B cell (primary cell): ENCODE measurements at regions of chr4 and their contacts with region 1.

Region 1: DNA sequence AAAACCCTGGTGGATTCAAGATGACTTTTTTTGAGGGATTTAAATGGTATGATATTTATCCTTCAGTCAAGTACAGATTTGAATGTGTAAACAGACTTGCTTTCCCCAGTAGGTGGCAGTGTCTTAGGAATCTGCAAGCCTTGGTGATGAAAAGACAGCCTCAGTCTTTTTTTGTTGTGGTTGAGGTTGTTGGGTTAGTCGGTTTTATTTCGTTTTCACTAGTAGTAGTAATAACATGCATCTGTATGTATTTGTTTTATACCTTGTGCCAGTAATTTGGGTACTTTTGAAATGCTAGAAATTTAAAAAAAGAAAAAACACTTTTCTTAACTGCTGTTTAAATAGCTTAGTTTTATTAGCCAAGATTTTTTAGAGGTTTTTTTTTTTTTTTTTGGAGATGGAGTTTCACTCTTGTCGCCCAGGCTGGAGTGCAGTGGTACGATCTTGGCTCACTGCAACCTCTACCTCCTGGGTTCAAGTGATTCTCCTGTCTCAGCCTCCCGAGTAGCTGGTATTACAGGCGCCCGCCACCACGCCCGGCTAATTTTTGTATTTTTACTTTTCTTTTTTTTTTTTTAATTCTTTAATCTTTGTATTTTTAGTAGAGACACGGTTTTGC is 39.2 kb downstream of the COPS4 start:
- DNase-seq: peak; percentile 85
- ATAC-seq: peak; percentile 85
- H3K4me3 ChIP-seq: no peak overlapping the region
- H3K4me3 Mint-ChIP-seq: peak overlapping the region; percentile 71
- H3K27ac ChIP-seq: no peak overlapping the region
- H3K27ac Mint-ChIP-seq: peak overlapping the region; percentile 57
- H3K4me1 ChIP-seq: peaks cover 16 to 19% of the 10 kb centered on the region in 2 donors
- H3K4me1 Mint-ChIP-seq: peaks cover 20% of the 10 kb centered on the region
- H3K27me3 ChIP-seq: no peaks in the 10 kb centered on the region
- H3K27me3 Mint-ChIP-seq: no peaks in the 10 kb centered on the region
- CTCF ChIP-seq: peak; percentile 78

Region 2: GRCh38 chr4:82998898-82999297 is 75.3 kb before region 1 on chr4:
- CTCF ChIA-PET with region 1: no interaction called
- POLR2A ChIA-PET with region 1: no interaction called
- intact Hi-C with region 1: no loop called
- DNase-seq: no peak
- ATAC-seq: no peak
- H3K4me3 ChIP-seq: no peak overlapping the region
- H3K4me3 Mint-ChIP-seq: no peak overlapping the region
- H3K27ac ChIP-seq: no peak overlapping the region
- H3K27ac Mint-ChIP-seq: no peak overlapping the region
- H3K4me1 ChIP-seq: no peaks in the 10 kb centered on the region
- H3K4me1 Mint-ChIP-seq: peaks cover 7% of the 10 kb centered on the region
- H3K27me3 ChIP-seq: no peaks in the 10 kb centered on the region
- H3K27me3 Mint-ChIP-seq: no peaks in the 10 kb centered on the region
- CTCF ChIP-seq: no peak

Region 3: GRCh38 chr4:83054928-83055327 is 19.3 kb before region 1 on chr4:
- CTCF ChIA-PET with region 1: interaction called, 5 read pairs
- POLR2A ChIA-PET with region 1: interaction called, 6 read pairs
- intact Hi-C with region 1: loop called (anchors 2 kb)
- DNase-seq: peak; percentile 52
- ATAC-seq: no peak
- H3K4me3 ChIP-seq: no peak overlapping the region
- H3K4me3 Mint-ChIP-seq: no peak overlapping the region
- H3K27ac ChIP-seq: no peak overlapping the region
- H3K27ac Mint-ChIP-seq: no peak overlapping the region
- H3K4me1 ChIP-seq: no peaks in the 10 kb centered on the region
- H3K4me1 Mint-ChIP-seq: peaks cover 2% of the 10 kb centered on the region
- H3K27me3 ChIP-seq: no peaks in the 10 kb centered on the region
- H3K27me3 Mint-ChIP-seq: no peaks in the 10 kb centered on the region
- CTCF ChIP-seq: peak; percentile 59

Region 4: DNA sequence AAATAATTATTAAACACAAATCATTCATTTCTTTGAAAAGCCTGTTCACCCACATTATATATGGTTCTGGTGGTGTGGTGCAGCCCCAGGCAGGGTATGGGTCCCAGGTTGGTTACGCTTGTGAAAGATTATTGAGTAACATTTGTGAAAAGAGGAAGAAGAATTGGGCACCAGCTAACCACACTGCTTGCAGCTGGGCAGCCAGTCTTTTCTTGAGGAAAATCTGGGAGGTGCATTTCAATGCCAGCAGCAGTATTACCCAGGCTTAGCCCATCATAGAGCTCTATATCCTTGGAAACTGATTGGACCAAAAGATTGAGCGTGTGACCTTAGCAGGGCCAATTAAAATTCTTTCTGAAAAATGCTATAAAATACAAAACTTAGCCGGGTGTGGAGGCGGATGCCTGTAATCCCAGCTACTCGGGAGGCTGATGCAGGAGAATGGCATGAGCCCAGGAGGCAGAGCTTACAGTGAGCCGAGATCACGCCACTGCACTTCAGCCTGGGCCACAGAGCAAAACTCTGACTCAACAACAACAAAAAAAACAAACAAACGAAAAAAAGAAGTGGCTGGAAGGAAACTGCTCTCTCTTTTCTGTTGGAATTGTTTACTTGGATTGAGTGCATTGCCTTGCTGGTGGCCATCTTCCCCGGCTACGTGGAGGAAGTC is 50.1 kb after region 1 on chr4:
- CTCF ChIA-PET with region 1: interaction called, 5 read pairs
- POLR2A ChIA-PET with region 1: interaction called, 10 read pairs
- intact Hi-C with region 1: no loop called
- DNase-seq: peak; percentile 69
- ATAC-seq: peak; percentile 86
- H3K4me3 ChIP-seq: peak overlapping the region in 1 of 5 experiments; percentile 16
- H3K4me3 Mint-ChIP-seq: peak overlapping the region; percentile 75
- H3K27ac ChIP-seq: no peak overlapping the region
- H3K27ac Mint-ChIP-seq: peak overlapping the region; percentile 90
- H3K4me1 ChIP-seq: peaks cover 38 to 47% of the 10 kb centered on the region in 2 donors
- H3K4me1 Mint-ChIP-seq: peaks cover 48% of the 10 kb centered on the region
- H3K27me3 ChIP-seq: no peaks in the 10 kb centered on the region
- H3K27me3 Mint-ChIP-seq: no peaks in the 10 kb centered on the region
- CTCF ChIP-seq: no peak

Region 5: GRCh38 chr4:83252782-83253405 is 178.7 kb after region 1 on chr4:
- CTCF ChIA-PET with region 1: interaction called, 71 read pairs
- POLR2A ChIA-PET with region 1: interaction called, 5 read pairs
- intact Hi-C with region 1: no loop called
- DNase-seq: peak; percentile 82
- ATAC-seq: peak; percentile 69
- H3K4me3 ChIP-seq: no peak overlapping the region
- H3K4me3 Mint-ChIP-seq: no peak overlapping the region
- H3K27ac ChIP-seq: peak overlapping the region in 1 of 2 donors; percentile 3
- H3K27ac Mint-ChIP-seq: peak overlapping the region; percentile 65
- H3K4me1 ChIP-seq: peaks cover 46 to 49% of the 10 kb centered on the region in 2 donors
- H3K4me1 Mint-ChIP-seq: peaks cover 53% of the 10 kb centered on the region
- H3K27me3 ChIP-seq: no peaks in the 10 kb centered on the region
- H3K27me3 Mint-ChIP-seq: no peaks in the 10 kb centered on the region
- CTCF ChIP-seq: peak; percentile 85

Region 6: GRCh38 chr4:83267121-83267829 is 193.1 kb after region 1 on chr4:
- CTCF ChIA-PET with region 1: interaction called, 105 read pairs
- POLR2A ChIA-PET with region 1: no interaction called
- intact Hi-C with region 1: no loop called
- DNase-seq: no peak
- ATAC-seq: no peak
- H3K4me3 ChIP-seq: no peak overlapping the region
- H3K4me3 Mint-ChIP-seq: no peak overlapping the region
- H3K27ac ChIP-seq: no peak overlapping the region
- H3K27ac Mint-ChIP-seq: no peak overlapping the region
- H3K4me1 ChIP-seq: peaks cover under 1 to 12% of the 10 kb centered on the region in 2 donors
- H3K4me1 Mint-ChIP-seq: peaks cover 18% of the 10 kb centered on the region
- H3K27me3 ChIP-seq: no peaks in the 10 kb centered on the region
- H3K27me3 Mint-ChIP-seq: no peaks in the 10 kb centered on the region
- CTCF ChIP-seq: no peak

Region 7: DNA sequence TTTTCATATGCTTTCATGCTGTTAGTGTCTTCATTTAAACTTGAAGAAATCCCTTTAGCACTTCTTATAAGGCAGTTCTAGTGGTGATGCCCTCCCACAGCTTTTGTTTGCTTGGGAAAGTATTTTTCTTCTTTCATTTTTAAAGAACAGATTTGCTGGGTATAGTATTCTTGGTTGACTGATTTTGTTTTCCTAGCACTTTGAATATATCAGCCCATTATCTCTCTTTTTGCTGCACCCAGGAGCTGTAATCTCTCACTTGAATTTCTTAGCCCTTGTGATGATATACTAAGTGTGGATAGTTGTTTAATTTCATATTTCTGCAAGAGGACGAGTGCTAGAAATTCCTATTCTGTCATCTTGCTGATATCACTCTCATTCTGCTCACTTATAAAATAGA is 745.4 kb after region 1 on chr4:
- CTCF ChIA-PET with region 1: no interaction called
- POLR2A ChIA-PET with region 1: no interaction called
- intact Hi-C with region 1: no loop called
- DNase-seq: no peak
- ATAC-seq: no peak
- H3K4me3 ChIP-seq: no peak overlapping the region
- H3K4me3 Mint-ChIP-seq: no peak overlapping the region
- H3K27ac ChIP-seq: no peak overlapping the region
- H3K27ac Mint-ChIP-seq: no peak overlapping the region
- H3K4me1 ChIP-seq: no peaks in the 10 kb centered on the region
- H3K4me1 Mint-ChIP-seq: no peaks in the 10 kb centered on the region
- H3K27me3 ChIP-seq: no peaks in the 10 kb centered on the region
- H3K27me3 Mint-ChIP-seq: no peaks in the 10 kb centered on the region
- CTCF ChIP-seq: no peak